ENCODE measurements at regions of chr15 and their contacts with region 1.

Region 1: DNA sequence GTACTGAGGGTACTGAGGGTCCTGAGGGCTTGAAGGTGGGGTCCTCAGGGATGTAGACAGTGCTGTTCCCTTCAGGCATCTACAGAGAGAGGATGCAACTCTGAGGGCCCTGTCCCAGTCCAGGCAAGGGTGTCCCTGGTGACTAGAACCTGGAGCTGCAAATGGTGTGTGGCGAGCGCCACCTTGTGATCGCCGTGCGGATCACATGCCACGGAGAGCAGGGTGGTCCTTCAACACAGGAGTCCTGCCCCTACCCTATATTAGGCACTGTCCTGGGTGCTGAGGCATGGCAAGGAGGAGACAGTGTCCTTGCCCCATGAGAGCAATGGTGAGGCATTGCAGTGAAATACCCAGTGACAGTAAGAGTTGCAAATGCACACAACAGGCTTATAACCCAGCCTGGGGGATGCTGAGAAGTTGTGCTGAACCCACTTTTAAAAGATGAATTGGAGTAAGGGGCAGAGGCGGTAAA is 23.6 kb downstream of the RHCG start:
- DNase-seq: peak in 1 of 2 donors; percentile 17
- ATAC-seq: peak in 6 of 8 donors; percentile 48 to 78 (median 55)
- H3K4me3 ChIP-seq: no peak overlapping the region
- H3K27ac ChIP-seq: no peak overlapping the region
- H3K4me1 ChIP-seq: no peaks in the 10 kb centered on the region
- H3K27me3 ChIP-seq: peaks cover 12 to 62% (median 44%) of the 10 kb centered on the region in 7 donors
- CTCF ChIP-seq: peak; percentile 11 to 67 (median 61)

Region 2: GRCh38 chr15:89531796-89532537 is 59.1 kb after region 1 on chr15:
- intact Hi-C with region 1: loop called in 1 of 10 experiments (anchors 10 kb)
- DNase-seq: no peak
- ATAC-seq: no peak
- H3K4me3 ChIP-seq: no peak overlapping the region
- H3K27ac ChIP-seq: no peak overlapping the region
- H3K4me1 ChIP-seq: no peaks in the 10 kb centered on the region
- H3K27me3 ChIP-seq: peaks cover 0 to under 1% (median 0%) of the 10 kb centered on the region in 7 donors
- CTCF ChIP-seq: no peak

Measured in heart right ventricle (tissue), 16 donors.